Heart right ventricle (tissue), 16 donors: ENCODE measurements at regions of chr16 and their contacts with region 1.

Region 1: GRCh38 chr16:89079434-89079980 is 14.1 kb upstream of the ACSF3 start:
- DNase-seq: no peak
- ATAC-seq: no peak
- H3K4me3 ChIP-seq: no peak overlapping the region
- H3K27ac ChIP-seq: no peak overlapping the region
- H3K4me1 ChIP-seq: no peaks in the 10 kb centered on the region
- H3K27me3 ChIP-seq: peaks cover 0 to 8% (median 0%) of the 10 kb centered on the region in 7 donors
- CTCF ChIP-seq: no peak

Region 2: DNA sequence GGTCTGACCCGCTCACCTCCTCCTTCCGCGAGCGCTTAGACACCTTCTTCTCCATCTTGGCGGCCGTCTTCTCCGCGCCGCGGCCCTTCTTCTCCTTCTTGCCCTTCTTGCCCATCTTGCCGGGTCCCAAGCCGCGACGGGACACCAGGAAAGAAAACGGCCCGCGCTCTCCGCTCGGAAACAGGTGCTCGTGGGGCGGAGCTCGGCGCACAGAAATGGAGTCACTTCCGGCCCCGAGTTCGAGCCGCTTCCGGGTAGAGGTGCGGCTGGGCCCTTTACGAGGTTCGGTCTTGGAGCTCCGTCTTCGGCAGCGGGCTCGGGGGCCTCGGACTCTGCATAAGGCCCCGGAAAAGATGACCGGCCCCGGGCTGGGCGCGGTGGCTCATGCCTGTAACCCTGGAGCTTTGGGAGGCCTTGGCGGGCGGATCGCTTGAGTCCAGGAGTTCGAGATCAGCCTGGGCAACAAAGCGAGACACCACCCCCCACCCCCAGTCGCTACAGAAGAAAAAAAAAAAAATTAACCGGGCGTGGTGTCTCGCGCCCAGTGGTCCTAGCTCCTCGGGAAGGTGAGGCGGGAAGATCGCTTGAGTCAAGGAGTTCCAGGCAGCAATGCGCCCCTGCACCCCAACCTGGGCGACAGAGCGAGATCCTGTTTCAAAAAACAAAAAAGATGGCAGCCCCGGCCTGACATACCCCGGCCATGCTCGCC is 1313.6 kb before region 1 on chr16 and contains the start of gene KLHDC4:
- intact Hi-C with region 1: no loop called
- DNase-seq: peak; percentile 88 to 89
- ATAC-seq: peak; percentile 90 to 97 (median 96)
- H3K4me3 ChIP-seq: peak within 1 kb of the TSS; percentile 66 to 100 (median 95)
- H3K27ac ChIP-seq: peak within 1 kb of the TSS in 9 of 10 donors; percentile 77 to 94 (median 86)
- H3K4me1 ChIP-seq: peaks cover 5 to 23% (median 19%) of the 10 kb centered on the region in 9 donors
- H3K27me3 ChIP-seq: peaks cover 0 to 1% (median 0%) of the 10 kb centered on the region in 7 donors
- CTCF ChIP-seq: no peak
- total RNA-seq, gene KLHDC4: 7.8 to 19.0 (median 12.9) TPM

Region 3: GRCh38 chr16:89119661-89120645 is 40.4 kb after region 1 on chr16:
- intact Hi-C with region 1: loop called in 1 of 10 experiments (anchors 2 kb)
- DNase-seq: no peak
- ATAC-seq: no peak
- H3K4me3 ChIP-seq: no peak overlapping the region
- H3K27ac ChIP-seq: no peak overlapping the region
- H3K4me1 ChIP-seq: peaks cover 0 to 22% (median 0%) of the 10 kb centered on the region in 9 donors
- H3K27me3 ChIP-seq: no peaks in the 10 kb centered on the region
- CTCF ChIP-seq: no peak